Activated CD4-positive, alpha-beta T cell treated with anti-CD3 and anti-CD28 coated beads, Interleukin-2, amount 10 ng/mL, durations not matched to agents 24 days and 14 days (primary cell): ENCODE measurements at regions of chr5 and their contacts with region 1.

Region 1: GRCh38 chr5:6273090-6273735 is 105.1 kb downstream of the MED10 start:
- DNase-seq: peak; percentile 51
- H3K4me3 Mint-ChIP-seq: peak overlapping the region; percentile 42
- H3K27ac Mint-ChIP-seq: peak overlapping the region; percentile 94
- H3K4me1 Mint-ChIP-seq: peaks cover 25% of the 10 kb centered on the region
- H3K27me3 Mint-ChIP-seq: no peaks in the 10 kb centered on the region

Region 2: DNA sequence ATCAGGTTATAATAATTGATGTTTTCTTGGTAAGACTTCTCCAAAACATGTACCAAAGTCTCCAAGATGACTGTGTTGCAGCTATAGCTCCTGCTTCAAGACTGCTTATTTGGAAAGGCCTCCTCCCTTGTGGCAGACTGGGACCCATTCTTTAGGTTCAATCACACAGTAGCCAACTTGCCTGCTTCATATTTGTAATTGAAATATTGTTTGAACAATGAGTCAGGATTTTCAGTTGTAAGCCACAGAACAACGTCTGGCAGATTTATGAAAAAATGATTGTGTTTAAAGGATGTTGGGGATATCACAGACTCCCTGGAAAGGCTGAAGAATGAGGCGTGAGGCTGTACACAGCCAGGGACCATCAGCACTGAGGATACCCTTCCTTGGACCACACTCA is 353.8 kb before region 1 on chr5:
- intact Hi-C with region 1: no loop called
- DNase-seq: no peak
- H3K4me3 Mint-ChIP-seq: no peak overlapping the region
- H3K27ac Mint-ChIP-seq: no peak overlapping the region
- H3K4me1 Mint-ChIP-seq: no peaks in the 10 kb centered on the region
- H3K27me3 Mint-ChIP-seq: no peaks in the 10 kb centered on the region

Region 3: GRCh38 chr5:6261668-6262067 is 11.5 kb before region 1 on chr5:
- intact Hi-C with region 1: loop called (anchors 1 kb)
- DNase-seq: peak; percentile 67
- H3K4me3 Mint-ChIP-seq: peak overlapping the region; percentile 56
- H3K27ac Mint-ChIP-seq: peak overlapping the region; percentile 92
- H3K4me1 Mint-ChIP-seq: peaks cover 21% of the 10 kb centered on the region
- H3K27me3 Mint-ChIP-seq: no peaks in the 10 kb centered on the region